ENCODE measurements at regions of chrX and their contacts with region 1.

Region 1: GRCh38 chrX:74291964-74292807 is 11.8 kb upstream of the ZCCHC13 start:
- DNase-seq: peak; percentile 81 to 88 (median 85)
- H3K4me3 ChIP-seq: peak overlapping the region; percentile 94 to 96
- H3K4me3 Mint-ChIP-seq: peak overlapping the region; percentile 90 to 100 (median 96)
- H3K27ac ChIP-seq: peak overlapping the region; percentile 84
- H3K27ac Mint-ChIP-seq: peak overlapping the region; percentile 94 to 98 (median 98)
- H3K4me1 ChIP-seq: peaks cover 28% of the 10 kb centered on the region
- H3K4me1 Mint-ChIP-seq: peaks cover 5 to 34% (median 13%) of the 10 kb centered on the region in 4 donors
- H3K27me3 ChIP-seq: no peaks in the 10 kb centered on the region
- H3K27me3 Mint-ChIP-seq: no peaks in the 10 kb centered on the region

Region 2: GRCh38 chrX:74234818-74235217 is 57.4 kb before region 1 on chrX:
- CTCF ChIA-PET with region 1: no interaction called
- POLR2A ChIA-PET with region 1: no interaction called
- intact Hi-C with region 1: loop called (anchors 5 kb)
- DNase-seq: no peak
- H3K4me3 ChIP-seq: no peak overlapping the region
- H3K4me3 Mint-ChIP-seq: no peak overlapping the region
- H3K27ac ChIP-seq: no peak overlapping the region
- H3K27ac Mint-ChIP-seq: no peak overlapping the region
- H3K4me1 ChIP-seq: no peaks in the 10 kb centered on the region
- H3K4me1 Mint-ChIP-seq: peaks cover 0 to 4% (median 2%) of the 10 kb centered on the region in 4 donors
- H3K27me3 ChIP-seq: no peaks in the 10 kb centered on the region
- H3K27me3 Mint-ChIP-seq: no peaks in the 10 kb centered on the region

Region 3: DNA sequence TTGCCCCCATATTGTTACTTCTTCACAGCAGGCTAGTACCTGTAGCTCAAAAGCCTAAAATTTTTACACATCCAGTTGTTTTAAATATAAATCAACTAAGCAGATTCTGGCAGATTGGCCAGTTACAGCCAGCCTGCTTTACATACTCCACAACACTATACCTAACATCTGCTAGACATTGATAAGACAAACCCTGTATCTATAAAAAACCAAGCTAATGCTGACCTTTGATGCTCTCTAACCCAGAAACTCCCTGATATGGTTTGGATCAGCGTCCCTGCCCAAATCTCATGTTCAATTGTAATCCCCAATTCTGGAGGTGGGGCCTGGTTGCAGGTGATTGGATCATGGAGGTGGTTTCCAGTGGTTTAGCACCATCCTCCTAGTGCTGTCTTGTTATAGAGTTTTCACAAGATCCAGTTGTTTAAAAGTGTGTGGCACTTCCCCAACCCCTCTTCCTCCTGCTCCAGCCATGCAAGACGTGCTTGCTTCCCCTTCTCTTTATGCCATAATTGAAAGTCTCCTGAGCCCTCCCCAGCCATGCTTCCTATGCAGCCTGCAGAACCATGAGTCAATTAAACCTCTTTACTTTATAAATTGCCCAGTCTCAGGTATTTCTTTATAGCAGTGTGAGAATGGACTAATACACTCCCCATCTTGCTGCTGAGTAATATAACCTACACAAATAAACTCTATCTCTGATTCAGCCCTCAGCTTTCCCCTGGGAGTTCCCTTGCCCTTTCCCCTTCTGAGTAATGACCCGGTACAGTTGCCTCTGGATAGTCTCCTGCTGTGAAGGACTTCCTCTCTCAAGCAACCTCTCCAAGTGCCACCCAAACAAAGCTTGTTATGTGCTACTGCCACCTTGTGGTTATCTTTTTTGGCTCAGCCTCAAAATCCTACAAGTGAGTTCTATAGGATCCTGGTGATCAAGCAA is 51.4 kb after region 1 on chrX:
- CTCF ChIA-PET with region 1: no interaction called
- POLR2A ChIA-PET with region 1: no interaction called
- intact Hi-C with region 1: loop called (anchors 5 kb)
- DNase-seq: peak; percentile 43 to 57 (median 47)
- H3K4me3 ChIP-seq: no peak overlapping the region
- H3K4me3 Mint-ChIP-seq: no peak overlapping the region
- H3K27ac ChIP-seq: no peak overlapping the region
- H3K27ac Mint-ChIP-seq: no peak overlapping the region
- H3K4me1 ChIP-seq: no peaks in the 10 kb centered on the region
- H3K4me1 Mint-ChIP-seq: no peaks in the 10 kb centered on the region
- H3K27me3 ChIP-seq: no peaks in the 10 kb centered on the region
- H3K27me3 Mint-ChIP-seq: peaks cover 0 to 3% of the 10 kb centered on the region in 2 donors

Region 4: GRCh38 chrX:75156021-75156945 is 864.1 kb after region 1 on chrX and contains the start of gene ABCB7:
- CTCF ChIA-PET with region 1: no interaction called
- POLR2A ChIA-PET with region 1: no interaction called
- intact Hi-C with region 1: loop called (anchors 10 kb)
- DNase-seq: peak; percentile 56 to 70 (median 61)
- H3K4me3 ChIP-seq: peak within 1 kb of the TSS; percentile 65 to 74
- H3K4me3 Mint-ChIP-seq: peak within 1 kb of the TSS; percentile 89 to 98 (median 95)
- H3K27ac ChIP-seq: peak within 1 kb of the TSS; percentile 76
- H3K27ac Mint-ChIP-seq: peak within 1 kb of the TSS; percentile 95 to 98 (median 97)
- H3K4me1 ChIP-seq: peaks cover 20% of the 10 kb centered on the region
- H3K4me1 Mint-ChIP-seq: peaks cover 20 to 49% (median 31%) of the 10 kb centered on the region in 4 donors
- H3K27me3 ChIP-seq: no peaks in the 10 kb centered on the region
- H3K27me3 Mint-ChIP-seq: no peaks in the 10 kb centered on the region
- total RNA-seq, gene ABCB7: 24.1 to 29.4 TPM